ENCODE measurements at regions of chr3 and their contacts with region 1.

Region 1: GRCh38 chr3:18740631-18741583 is 315.8 kb upstream of the SATB1 start:
- DNase-seq: peak; percentile 76
- H3K4me3 Mint-ChIP-seq: peak overlapping the region; percentile 36
- H3K27ac Mint-ChIP-seq: peak overlapping the region; percentile 92
- H3K4me1 Mint-ChIP-seq: peaks cover 92% of the 10 kb centered on the region
- H3K27me3 Mint-ChIP-seq: no peaks in the 10 kb centered on the region

Region 2: GRCh38 chr3:18046131-18046915 is 694.6 kb before region 1 on chr3:
- CTCF ChIA-PET with region 1: no interaction called
- POLR2A ChIA-PET with region 1: no interaction called
- intact Hi-C with region 1: no loop called
- DNase-seq: no peak
- H3K4me3 Mint-ChIP-seq: no peak overlapping the region
- H3K27ac Mint-ChIP-seq: no peak overlapping the region
- H3K4me1 Mint-ChIP-seq: no peaks in the 10 kb centered on the region
- H3K27me3 Mint-ChIP-seq: peaks cover 1% of the 10 kb centered on the region

Region 3: DNA sequence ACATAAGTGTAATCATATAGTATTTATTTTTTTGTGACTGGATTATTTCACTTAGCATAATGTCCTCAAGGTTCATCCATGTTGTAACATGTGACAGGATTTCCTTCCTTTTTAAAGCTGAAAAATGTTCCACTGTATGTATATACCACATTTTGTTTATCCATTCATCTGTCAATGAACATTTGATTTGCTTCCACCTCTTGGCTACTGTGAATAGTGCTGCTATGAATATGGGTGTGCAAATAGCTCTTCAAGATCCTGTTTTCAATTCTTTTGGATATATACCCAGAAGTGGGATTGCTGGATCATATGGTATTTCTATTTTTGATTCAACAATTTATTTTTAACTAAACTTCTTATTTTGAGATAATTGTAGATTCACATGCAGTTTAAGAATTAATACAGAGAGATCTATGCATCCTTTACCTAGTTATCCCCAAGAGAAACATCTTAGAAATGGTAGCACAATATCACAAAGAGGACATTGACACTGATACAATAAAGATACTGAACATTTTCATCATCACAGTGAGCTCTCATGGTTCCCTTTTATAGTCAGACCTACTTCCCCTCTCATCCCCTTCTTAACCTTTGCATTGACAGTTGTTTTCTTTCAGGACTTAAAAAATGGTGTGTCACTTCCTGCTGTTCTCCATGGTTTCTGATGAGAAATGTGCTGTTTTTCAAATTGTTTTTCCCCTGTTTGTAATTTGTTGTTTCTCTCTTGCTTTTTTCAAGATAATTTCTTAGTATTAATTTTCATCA is 405.9 kb before region 1 on chr3:
- CTCF ChIA-PET with region 1: no interaction called
- POLR2A ChIA-PET with region 1: no interaction called
- intact Hi-C with region 1: no loop called
- DNase-seq: no peak
- H3K4me3 Mint-ChIP-seq: no peak overlapping the region
- H3K27ac Mint-ChIP-seq: no peak overlapping the region
- H3K4me1 Mint-ChIP-seq: peaks cover 10% of the 10 kb centered on the region
- H3K27me3 Mint-ChIP-seq: no peaks in the 10 kb centered on the region

Region 4: GRCh38 chr3:18444595-18445400 is 296.1 kb before region 1 on chr3:
- CTCF ChIA-PET with region 1: interaction called, 5 read pairs
- POLR2A ChIA-PET with region 1: interaction called, 45 read pairs
- intact Hi-C with region 1: loop called (anchors 1 kb)
- DNase-seq: peak; percentile 87
- H3K4me3 Mint-ChIP-seq: peak overlapping the region; percentile 99
- H3K27ac Mint-ChIP-seq: peak overlapping the region; percentile 99
- H3K4me1 Mint-ChIP-seq: peaks cover 36% of the 10 kb centered on the region
- H3K27me3 Mint-ChIP-seq: no peaks in the 10 kb centered on the region

Region 5: GRCh38 chr3:18669374-18669773 is 71.5 kb before region 1 on chr3:
- CTCF ChIA-PET with region 1: no interaction called
- POLR2A ChIA-PET with region 1: interaction called, 14 read pairs
- intact Hi-C with region 1: no loop called
- DNase-seq: peak; percentile 77
- H3K4me3 Mint-ChIP-seq: peak overlapping the region; percentile 18
- H3K27ac Mint-ChIP-seq: peak overlapping the region; percentile 89
- H3K4me1 Mint-ChIP-seq: peaks cover 53% of the 10 kb centered on the region
- H3K27me3 Mint-ChIP-seq: no peaks in the 10 kb centered on the region

Region 6: GRCh38 chr3:18725668-18726407 is 15.1 kb before region 1 on chr3:
- CTCF ChIA-PET with region 1: interaction called, 3 read pairs
- POLR2A ChIA-PET with region 1: interaction called, 12 read pairs
- intact Hi-C with region 1: loop called (anchors 1 kb)
- DNase-seq: peak; percentile 66
- H3K4me3 Mint-ChIP-seq: peak overlapping the region; percentile 78
- H3K27ac Mint-ChIP-seq: peak overlapping the region; percentile 94
- H3K4me1 Mint-ChIP-seq: peaks cover 79% of the 10 kb centered on the region
- H3K27me3 Mint-ChIP-seq: no peaks in the 10 kb centered on the region

Region 7: GRCh38 chr3:18837137-18837755 is 96.3 kb after region 1 on chr3:
- CTCF ChIA-PET with region 1: no interaction called
- POLR2A ChIA-PET with region 1: no interaction called
- intact Hi-C with region 1: no loop called
- DNase-seq: no peak
- H3K4me3 Mint-ChIP-seq: no peak overlapping the region
- H3K27ac Mint-ChIP-seq: no peak overlapping the region
- H3K4me1 Mint-ChIP-seq: peaks cover 2% of the 10 kb centered on the region
- H3K27me3 Mint-ChIP-seq: no peaks in the 10 kb centered on the region

Region 8: GRCh38 chr3:18988614-18989229 is 247.8 kb after region 1 on chr3:
- CTCF ChIA-PET with region 1: no interaction called
- POLR2A ChIA-PET with region 1: no interaction called
- intact Hi-C with region 1: loop called (anchors 2 kb)
- DNase-seq: no peak
- H3K4me3 Mint-ChIP-seq: no peak overlapping the region
- H3K27ac Mint-ChIP-seq: no peak overlapping the region
- H3K4me1 Mint-ChIP-seq: peaks cover 15% of the 10 kb centered on the region
- H3K27me3 Mint-ChIP-seq: peaks cover 25% of the 10 kb centered on the region

Region 9: GRCh38 chr3:20141851-20142250 is 1400.9 kb after region 1 on chr3:
- CTCF ChIA-PET with region 1: no interaction called
- POLR2A ChIA-PET with region 1: no interaction called
- intact Hi-C with region 1: no loop called
- DNase-seq: no peak
- H3K4me3 Mint-ChIP-seq: no peak overlapping the region
- H3K27ac Mint-ChIP-seq: no peak overlapping the region
- H3K4me1 Mint-ChIP-seq: no peaks in the 10 kb centered on the region
- H3K27me3 Mint-ChIP-seq: no peaks in the 10 kb centered on the region

Measured in activated CD4-positive, alpha-beta memory T cell treated with anti-CD3 and anti-CD28 coated beads for 36 hours (primary cell).